PC-3 (cell line): ENCODE measurements at regions of chr13 and their contacts with region 1.

Region 1: DNA sequence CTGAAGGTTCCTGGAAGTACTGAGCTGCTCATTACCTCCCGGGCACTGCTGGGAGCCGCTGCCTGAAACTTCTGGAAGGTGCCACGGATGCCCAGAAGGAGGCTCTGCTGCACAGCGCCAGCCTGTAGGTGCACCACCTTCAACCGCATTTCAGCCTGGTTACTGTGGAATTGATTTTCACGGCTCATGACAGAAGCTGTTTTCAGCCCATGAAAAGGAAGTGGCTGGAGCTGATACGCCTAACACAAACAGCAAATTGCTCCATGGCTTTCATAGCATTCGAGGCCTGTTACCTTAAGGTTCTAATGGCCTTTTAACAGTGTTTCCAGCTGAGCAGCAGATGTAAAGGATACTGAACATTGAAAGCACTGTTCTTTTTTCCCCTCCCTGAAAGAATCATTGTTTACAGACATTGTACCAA is 22.0 kb downstream of the GPC6 start:
- DNase-seq: peak; percentile 78
- ATAC-seq: peak; percentile 96
- H3K4me3 ChIP-seq: no peak overlapping the region
- H3K27ac ChIP-seq: peak overlapping the region; percentile 91
- H3K4me1 ChIP-seq: peaks cover 26% of the 10 kb centered on the region
- H3K27me3 ChIP-seq: no peaks in the 10 kb centered on the region
- CTCF ChIP-seq: peak; percentile 81

Region 2: DNA sequence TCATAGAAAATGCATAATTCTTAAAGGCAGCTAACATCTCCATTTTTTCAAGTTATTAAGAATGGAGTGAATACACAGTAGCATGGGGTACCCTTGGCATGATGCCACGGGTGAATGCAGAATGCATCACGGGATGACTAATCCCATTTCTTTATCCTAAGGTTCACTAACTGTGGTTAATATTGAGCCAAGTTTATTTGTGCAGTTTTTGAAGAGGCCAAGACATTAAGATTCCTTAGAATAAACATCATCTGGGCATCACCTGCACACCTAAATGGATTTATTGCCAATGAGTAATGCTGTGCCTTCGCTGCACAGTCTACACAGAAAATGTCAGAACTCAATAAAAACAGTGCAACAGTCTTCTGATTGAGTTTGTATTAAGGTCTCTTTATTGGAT is 311.1 kb after region 1 on chr13:
- CTCF ChIA-PET with region 1: no interaction called
- POLR2A ChIA-PET with region 1: no interaction called
- intact Hi-C with region 1: loop called (anchors 1 kb)
- DNase-seq: peak; percentile 94
- ATAC-seq: peak; percentile 98
- H3K4me3 ChIP-seq: no peak overlapping the region
- H3K27ac ChIP-seq: peak overlapping the region; percentile 69
- H3K4me1 ChIP-seq: peaks cover 18% of the 10 kb centered on the region
- H3K27me3 ChIP-seq: no peaks in the 10 kb centered on the region
- CTCF ChIP-seq: no peak

Region 3: GRCh38 chr13:93727211-93728141 is 478.8 kb after region 1 on chr13:
- CTCF ChIA-PET with region 1: no interaction called
- POLR2A ChIA-PET with region 1: no interaction called
- intact Hi-C with region 1: loop called (anchors 5 kb)
- DNase-seq: peak; percentile 85
- ATAC-seq: peak; percentile 83
- H3K4me3 ChIP-seq: no peak overlapping the region
- H3K27ac ChIP-seq: peak overlapping the region; percentile 76
- H3K4me1 ChIP-seq: peaks cover 24% of the 10 kb centered on the region
- H3K27me3 ChIP-seq: no peaks in the 10 kb centered on the region
- CTCF ChIP-seq: no peak

Region 4: GRCh38 chr13:93847173-93847572 is 598.5 kb after region 1 on chr13:
- CTCF ChIA-PET with region 1: no interaction called
- POLR2A ChIA-PET with region 1: no interaction called
- intact Hi-C with region 1: loop called (anchors 1 kb)
- DNase-seq: peak; percentile 80
- ATAC-seq: peak; percentile 70
- H3K4me3 ChIP-seq: no peak overlapping the region
- H3K27ac ChIP-seq: peak overlapping the region; percentile 52
- H3K4me1 ChIP-seq: peaks cover 10% of the 10 kb centered on the region
- H3K27me3 ChIP-seq: no peaks in the 10 kb centered on the region
- CTCF ChIP-seq: no peak

Region 5: DNA sequence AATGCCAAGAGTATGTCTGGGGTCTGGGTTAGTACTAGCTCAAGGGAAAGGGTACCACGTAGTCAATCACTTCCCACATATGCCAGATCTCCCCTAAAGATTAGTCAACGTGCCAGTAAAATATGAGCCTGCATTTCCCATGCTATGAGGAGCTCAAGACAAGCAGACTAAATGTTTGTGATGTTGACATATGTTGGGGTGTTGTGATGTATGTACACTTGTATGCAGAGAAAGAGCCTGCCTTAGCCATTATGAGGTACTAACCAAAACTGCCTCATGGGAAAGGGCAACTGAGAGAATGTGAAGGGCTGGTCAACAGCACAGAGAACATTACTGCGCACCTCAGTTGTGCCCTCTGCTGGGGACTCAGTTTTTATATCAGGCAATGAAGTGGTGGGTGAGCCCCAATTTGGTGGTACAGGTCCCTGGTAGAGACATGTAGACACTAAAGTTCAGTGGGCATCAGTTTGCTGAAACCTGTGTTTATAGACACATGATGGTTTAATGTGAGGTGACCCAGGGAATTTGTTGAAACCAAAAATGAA is 943.9 kb after region 1 on chr13:
- CTCF ChIA-PET with region 1: interaction called, 5 read pairs
- POLR2A ChIA-PET with region 1: no interaction called
- intact Hi-C with region 1: loop called (anchors 10 kb)
- DNase-seq: peak; percentile 53
- ATAC-seq: peak; percentile 59
- H3K4me3 ChIP-seq: no peak overlapping the region
- H3K27ac ChIP-seq: no peak overlapping the region
- H3K4me1 ChIP-seq: no peaks in the 10 kb centered on the region
- H3K27me3 ChIP-seq: no peaks in the 10 kb centered on the region
- CTCF ChIP-seq: peak; percentile 69

Region 6: DNA sequence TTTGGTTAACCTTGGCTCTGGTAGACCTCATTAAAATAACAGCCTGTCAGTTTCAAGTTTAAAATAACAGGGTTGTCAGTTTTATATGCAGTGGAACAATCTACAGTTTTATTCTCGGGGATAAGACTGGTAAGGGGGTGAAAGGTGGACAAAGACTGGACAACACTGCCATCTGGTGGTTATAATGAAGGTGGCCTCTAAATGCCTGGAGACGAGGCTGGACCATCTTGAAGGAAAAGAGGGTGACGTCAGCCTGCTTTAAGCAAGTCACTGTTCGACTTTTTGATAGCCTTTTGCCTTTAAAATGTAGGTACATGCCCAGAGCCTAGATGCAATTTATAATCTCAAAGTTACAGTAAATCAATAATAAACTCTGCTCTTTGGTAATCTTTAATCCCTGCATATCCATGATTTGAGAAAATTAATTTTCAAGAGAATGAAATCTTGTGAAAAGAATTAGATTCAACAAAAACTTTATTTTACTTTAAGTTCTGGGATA is 1113.8 kb after region 1 on chr13:
- CTCF ChIA-PET with region 1: no interaction called
- POLR2A ChIA-PET with region 1: no interaction called
- intact Hi-C with region 1: loop called (anchors 1 kb)
- DNase-seq: peak; percentile 82
- ATAC-seq: peak; percentile 96
- H3K4me3 ChIP-seq: no peak overlapping the region
- H3K27ac ChIP-seq: no peak overlapping the region
- H3K4me1 ChIP-seq: no peaks in the 10 kb centered on the region
- H3K27me3 ChIP-seq: no peaks in the 10 kb centered on the region
- CTCF ChIP-seq: peak; percentile 84